ENCODE measurements at regions of chr20 and their contacts with region 1.

Region 1: GRCh38 chr20:63973636-63974402 is 4.1 kb upstream of the ZNF512B start:
- DNase-seq: peak; percentile 79 to 83 (median 80)
- H3K4me3 ChIP-seq: peak overlapping the region in 1 of 3 experiments; percentile 42
- H3K4me3 Mint-ChIP-seq: peak overlapping the region in 1 of 2 donors; percentile 46
- H3K27ac ChIP-seq: no peak overlapping the region
- H3K27ac Mint-ChIP-seq: peak overlapping the region in 2 of 7 donors; percentile 0 to 77
- H3K4me1 ChIP-seq: peaks cover 23 to 40% of the 10 kb centered on the region in 2 donors
- H3K4me1 Mint-ChIP-seq: peaks cover 30% of the 10 kb centered on the region
- H3K27me3 ChIP-seq: peaks cover 0 to 20% of the 10 kb centered on the region in 2 donors
- H3K27me3 Mint-ChIP-seq: peaks cover 20 to 35% (median 20%) of the 10 kb centered on the region in 3 donors
- CTCF ChIP-seq: peak; percentile 98

Region 2: DNA sequence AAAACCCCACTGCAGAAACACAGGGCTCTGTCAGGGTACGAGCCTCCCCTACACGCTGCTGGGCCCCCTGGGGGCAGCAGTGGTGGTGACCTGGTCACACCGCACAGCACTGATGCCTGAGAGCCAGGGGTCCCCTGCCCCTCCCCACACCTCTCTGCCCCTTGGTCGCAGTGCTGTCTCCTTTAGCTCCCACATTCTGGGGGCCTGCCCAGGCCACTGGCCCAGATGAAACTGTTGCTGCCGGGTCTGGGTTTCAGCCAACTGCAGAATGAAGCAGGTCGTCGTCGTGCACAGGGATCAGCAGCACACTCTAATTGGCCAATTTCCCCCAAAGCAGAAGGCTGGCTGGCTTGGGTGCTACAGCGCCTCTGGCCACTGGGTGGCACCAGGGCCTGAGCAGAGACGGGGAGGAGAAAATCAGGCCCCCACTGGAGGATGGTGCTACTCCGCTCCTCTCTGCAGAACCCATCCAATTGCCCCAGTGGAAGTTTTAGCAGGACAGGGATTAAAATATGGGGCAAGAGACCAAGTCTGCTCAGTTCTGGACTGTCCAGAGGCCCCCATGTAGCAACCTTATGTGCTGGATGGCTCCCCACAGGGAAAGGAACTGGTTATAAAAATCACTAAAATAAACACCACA is 1073.6 kb before region 1 on chr20:
- intact Hi-C with region 1: no loop called
- DNase-seq: peak; percentile 48 to 65 (median 57)
- H3K4me3 ChIP-seq: no peak overlapping the region
- H3K4me3 Mint-ChIP-seq: no peak overlapping the region
- H3K27ac ChIP-seq: peak overlapping the region in 1 of 2 donors; percentile 32
- H3K27ac Mint-ChIP-seq: peak overlapping the region in 3 of 7 donors; percentile 26 to 75 (median 56)
- H3K4me1 ChIP-seq: peaks cover 0 to 7% of the 10 kb centered on the region in 2 donors
- H3K4me1 Mint-ChIP-seq: peaks cover 9% of the 10 kb centered on the region
- H3K27me3 ChIP-seq: no peaks in the 10 kb centered on the region
- H3K27me3 Mint-ChIP-seq: peaks cover 0 to 5% (median 1%) of the 10 kb centered on the region in 3 donors
- CTCF ChIP-seq: peak; percentile 91

Region 3: GRCh38 chr20:63434599-63435378 is 539.0 kb before region 1 on chr20:
- intact Hi-C with region 1: loop called in 1 of 2 experiments (anchors 5 kb)
- DNase-seq: peak; percentile 50 to 68 (median 54)
- H3K4me3 ChIP-seq: no peak overlapping the region
- H3K4me3 Mint-ChIP-seq: peak overlapping the region in 1 of 2 donors; percentile 64
- H3K27ac ChIP-seq: no peak overlapping the region
- H3K27ac Mint-ChIP-seq: no peak overlapping the region
- H3K4me1 ChIP-seq: peaks cover 5 to 8% of the 10 kb centered on the region in 2 donors
- H3K4me1 Mint-ChIP-seq: peaks cover 7% of the 10 kb centered on the region
- H3K27me3 ChIP-seq: no peaks in the 10 kb centered on the region
- H3K27me3 Mint-ChIP-seq: peaks cover 2 to 21% (median 9%) of the 10 kb centered on the region in 3 donors
- CTCF ChIP-seq: peak; percentile 85

Region 4: DNA sequence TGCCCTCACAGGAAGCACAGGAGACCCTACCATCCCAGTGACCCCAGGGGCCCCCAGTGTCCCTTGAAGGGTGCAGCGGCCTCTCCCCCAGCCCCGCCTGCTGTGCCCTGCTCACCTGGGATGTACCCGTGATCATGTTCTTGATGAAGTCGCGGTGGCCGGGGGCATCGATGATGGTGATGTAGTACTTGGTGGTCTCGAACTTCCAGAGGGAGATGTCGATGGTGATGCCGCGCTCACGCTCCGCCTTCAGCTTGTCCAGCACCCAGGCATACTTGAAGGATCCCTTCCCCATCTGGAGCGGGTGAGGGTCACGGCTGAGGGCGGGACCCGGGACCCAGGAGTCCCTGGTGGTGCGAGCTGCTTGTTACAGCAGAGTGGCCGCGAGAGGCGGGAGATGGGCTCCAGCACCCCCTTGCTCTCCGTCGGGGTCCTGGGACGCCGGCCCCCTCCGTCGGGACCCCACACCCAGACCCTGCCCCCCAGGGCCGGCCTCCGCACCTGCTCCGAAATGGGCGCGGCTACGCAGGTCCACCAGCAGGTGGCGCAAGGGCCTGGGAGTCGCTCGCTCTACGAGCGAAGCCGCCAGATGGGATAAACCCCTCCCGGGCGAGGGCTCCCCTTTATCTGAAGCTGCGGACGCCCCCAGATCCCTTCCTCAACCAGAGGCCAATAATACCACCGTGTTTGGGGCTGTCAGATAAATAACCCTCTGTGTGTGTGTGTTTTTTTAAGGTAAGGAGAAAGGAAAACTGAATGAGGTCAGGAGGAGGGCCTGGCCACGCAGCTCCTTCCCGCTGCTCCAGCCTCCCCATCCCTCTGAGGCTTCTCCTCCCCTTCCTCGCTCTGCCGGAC is 477.9 kb before region 1 on chr20:
- intact Hi-C with region 1: loop called (anchors 2 kb)
- DNase-seq: peak; percentile 45 to 64 (median 62)
- H3K4me3 ChIP-seq: peak overlapping the region in 2 of 3 experiments; percentile 8 to 68
- H3K4me3 Mint-ChIP-seq: peak overlapping the region; percentile 77 to 91
- H3K27ac ChIP-seq: no peak overlapping the region
- H3K27ac Mint-ChIP-seq: no peak overlapping the region
- H3K4me1 ChIP-seq: peaks cover 8 to 20% of the 10 kb centered on the region in 2 donors
- H3K4me1 Mint-ChIP-seq: peaks cover 5% of the 10 kb centered on the region
- H3K27me3 ChIP-seq: peaks cover 9 to 39% of the 10 kb centered on the region in 2 donors
- H3K27me3 Mint-ChIP-seq: peaks cover 36 to 64% (median 46%) of the 10 kb centered on the region in 3 donors
- CTCF ChIP-seq: peak; percentile 99

Region 5: DNA sequence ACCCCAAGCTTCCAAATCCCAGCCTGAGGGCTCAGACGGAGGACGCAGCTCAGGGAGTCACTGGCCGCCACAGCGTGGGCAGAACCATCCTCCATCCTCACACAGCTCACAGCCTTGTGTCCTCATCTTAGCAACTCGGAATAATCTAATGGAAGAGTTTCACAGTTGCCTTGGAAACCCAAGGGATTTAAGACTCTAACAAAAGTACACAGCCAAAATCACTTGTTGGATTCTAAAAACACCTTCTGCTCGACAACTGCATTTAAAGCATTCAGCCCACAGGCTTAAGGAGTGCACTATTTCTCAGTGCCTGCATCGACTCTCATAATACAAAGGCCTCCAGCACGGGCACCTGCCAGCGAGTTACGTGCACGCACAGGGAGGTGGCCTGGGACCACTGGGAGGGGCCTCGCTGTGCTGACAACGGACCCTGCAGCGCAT is 188.1 kb before region 1 on chr20:
- intact Hi-C with region 1: loop called (anchors 2 to 5 kb)
- DNase-seq: no peak
- H3K4me3 ChIP-seq: no peak overlapping the region
- H3K4me3 Mint-ChIP-seq: no peak overlapping the region
- H3K27ac ChIP-seq: no peak overlapping the region
- H3K27ac Mint-ChIP-seq: peak overlapping the region in 1 of 7 donors; percentile 68
- H3K4me1 ChIP-seq: peaks cover 0 to 6% of the 10 kb centered on the region in 2 donors
- H3K4me1 Mint-ChIP-seq: peaks cover 2% of the 10 kb centered on the region
- H3K27me3 ChIP-seq: no peaks in the 10 kb centered on the region
- H3K27me3 Mint-ChIP-seq: peaks cover 0 to 6% (median 2%) of the 10 kb centered on the region in 3 donors
- CTCF ChIP-seq: no peak

Region 6: GRCh38 chr20:64038565-64039292 is 64.9 kb after region 1 on chr20:
- intact Hi-C with region 1: no loop called
- DNase-seq: peak; percentile 50 to 57 (median 55)
- H3K4me3 ChIP-seq: peak overlapping the region; percentile 24 to 80 (median 31)
- H3K4me3 Mint-ChIP-seq: peak overlapping the region; percentile 71 to 86
- H3K27ac ChIP-seq: no peak overlapping the region
- H3K27ac Mint-ChIP-seq: no peak overlapping the region
- H3K4me1 ChIP-seq: peaks cover 24 to 40% of the 10 kb centered on the region in 2 donors
- H3K4me1 Mint-ChIP-seq: peaks cover 20% of the 10 kb centered on the region
- H3K27me3 ChIP-seq: peaks cover 24 to 56% of the 10 kb centered on the region in 2 donors
- H3K27me3 Mint-ChIP-seq: peaks cover 59 to 77% (median 60%) of the 10 kb centered on the region in 3 donors
- CTCF ChIP-seq: peak; percentile 81

Measured in CD14-positive monocyte (primary cell).